CD8-positive, alpha-beta T cell (primary cell): ENCODE measurements at regions of chr7 and their contacts with region 1.

Region 1: GRCh38 chr7:102456327-102456726 is 8.3 kb downstream of the ALKBH4 start:
- DNase-seq: no peak
- ATAC-seq: no peak
- H3K4me3 ChIP-seq: no peak overlapping the region
- H3K4me3 Mint-ChIP-seq: no peak overlapping the region
- H3K27ac ChIP-seq: no peak overlapping the region
- H3K27ac Mint-ChIP-seq: no peak overlapping the region
- H3K4me1 ChIP-seq: no peaks in the 10 kb centered on the region
- H3K4me1 Mint-ChIP-seq: peaks cover 3% of the 10 kb centered on the region
- H3K27me3 ChIP-seq: no peaks in the 10 kb centered on the region
- H3K27me3 Mint-ChIP-seq: no peaks in the 10 kb centered on the region
- CTCF ChIP-seq: no peak

Region 2: DNA sequence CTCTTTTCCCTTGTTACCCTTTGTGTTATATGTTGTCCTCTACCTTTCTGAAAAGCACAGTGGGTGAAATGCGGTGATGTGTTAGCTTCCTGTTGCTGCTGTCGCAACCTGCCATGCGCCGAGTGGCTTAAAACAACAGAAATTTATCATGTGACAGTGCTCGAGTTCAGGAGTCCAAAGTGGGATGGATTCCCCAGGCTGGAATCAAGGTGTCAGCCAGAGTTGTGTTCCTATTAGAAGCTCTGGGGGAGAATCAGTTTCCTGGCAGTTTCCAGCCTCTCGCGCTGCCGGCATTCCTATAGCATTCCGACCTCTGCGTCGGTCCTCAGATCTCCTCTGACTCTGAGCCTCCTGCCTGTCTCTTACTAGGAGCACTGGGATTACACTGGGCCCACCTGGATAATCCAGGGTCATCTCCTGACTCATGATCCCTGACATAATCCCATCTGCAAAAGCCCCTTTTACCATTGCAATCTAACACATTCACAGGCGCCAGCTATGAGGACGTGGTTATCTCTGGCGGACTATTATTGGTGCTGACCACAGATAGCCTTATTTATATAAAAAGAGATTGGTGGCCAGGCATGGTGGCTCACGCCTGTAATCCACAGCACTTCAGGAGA is 431.4 kb before region 1 on chr7:
- CTCF ChIA-PET with region 1: no interaction called
- POLR2A ChIA-PET with region 1: no interaction called
- intact Hi-C with region 1: no loop called
- DNase-seq: no peak
- ATAC-seq: no peak
- H3K4me3 ChIP-seq: no peak overlapping the region
- H3K4me3 Mint-ChIP-seq: no peak overlapping the region
- H3K27ac ChIP-seq: no peak overlapping the region
- H3K27ac Mint-ChIP-seq: peak overlapping the region; percentile 28
- H3K4me1 ChIP-seq: no peaks in the 10 kb centered on the region
- H3K4me1 Mint-ChIP-seq: peaks cover 37% of the 10 kb centered on the region
- H3K27me3 ChIP-seq: no peaks in the 10 kb centered on the region
- H3K27me3 Mint-ChIP-seq: no peaks in the 10 kb centered on the region
- CTCF ChIP-seq: no peak

Region 3: DNA sequence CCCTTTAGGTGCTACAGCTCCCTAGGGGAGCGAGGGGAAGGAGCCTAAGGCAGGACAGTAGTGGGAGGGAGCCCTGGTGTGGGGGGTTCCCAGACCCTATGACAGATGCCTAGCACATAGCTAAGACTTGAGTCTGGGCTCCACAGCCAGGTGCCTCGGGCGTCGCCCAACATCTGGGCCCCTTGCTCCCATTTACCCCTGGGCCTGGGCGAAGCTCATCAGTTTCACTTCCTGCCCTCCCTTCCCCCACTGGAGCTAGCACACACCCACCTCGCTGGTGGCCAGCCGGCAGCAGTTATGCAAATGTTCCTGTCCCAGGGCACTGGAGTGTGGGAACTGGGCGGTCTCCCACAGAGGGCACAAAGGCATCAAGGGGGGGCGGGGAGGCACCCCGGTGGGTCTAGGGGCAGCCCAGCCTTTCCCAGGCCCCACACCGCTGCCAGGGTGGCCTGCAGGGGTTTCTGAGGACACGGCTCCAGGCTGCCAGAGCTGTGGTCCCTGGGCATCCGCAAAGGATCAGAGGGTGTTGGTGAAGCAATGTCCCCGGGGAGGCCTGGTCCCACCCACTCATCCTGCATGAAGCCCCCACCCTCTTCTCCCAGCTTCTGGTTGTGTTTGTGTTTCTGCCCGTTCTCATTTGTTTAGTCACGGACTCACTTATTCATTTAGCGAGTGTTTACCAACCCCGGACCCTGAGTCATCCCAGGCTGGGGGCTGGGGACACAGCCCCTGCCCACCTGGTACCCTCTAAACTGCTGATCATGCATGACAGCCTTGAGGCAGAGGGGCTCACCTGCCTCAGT is 149.3 kb before region 1 on chr7:
- CTCF ChIA-PET with region 1: no interaction called
- POLR2A ChIA-PET with region 1: no interaction called
- intact Hi-C with region 1: no loop called
- DNase-seq: peak in 2 of 9 experiments; percentile 44
- ATAC-seq: peak; percentile 56
- H3K4me3 ChIP-seq: no peak overlapping the region
- H3K4me3 Mint-ChIP-seq: peak overlapping the region; percentile 5
- H3K27ac ChIP-seq: no peak overlapping the region
- H3K27ac Mint-ChIP-seq: no peak overlapping the region
- H3K4me1 ChIP-seq: no peaks in the 10 kb centered on the region
- H3K4me1 Mint-ChIP-seq: peaks cover 8% of the 10 kb centered on the region
- H3K27me3 ChIP-seq: no peaks in the 10 kb centered on the region
- H3K27me3 Mint-ChIP-seq: no peaks in the 10 kb centered on the region
- CTCF ChIP-seq: no peak

Region 4: GRCh38 chr7:102412548-102412947 is 43.8 kb before region 1 on chr7:
- CTCF ChIA-PET with region 1: interaction called, 65 read pairs
- POLR2A ChIA-PET with region 1: interaction called, 4 read pairs
- intact Hi-C with region 1: no loop called
- DNase-seq: peak in 7 of 9 experiments; percentile 38 to 71 (median 62)
- ATAC-seq: peak; percentile 32
- H3K4me3 ChIP-seq: no peak overlapping the region
- H3K4me3 Mint-ChIP-seq: no peak overlapping the region
- H3K27ac ChIP-seq: no peak overlapping the region
- H3K27ac Mint-ChIP-seq: no peak overlapping the region
- H3K4me1 ChIP-seq: peaks cover 37% of the 10 kb centered on the region
- H3K4me1 Mint-ChIP-seq: peaks cover 40% of the 10 kb centered on the region
- H3K27me3 ChIP-seq: no peaks in the 10 kb centered on the region
- H3K27me3 Mint-ChIP-seq: no peaks in the 10 kb centered on the region
- CTCF ChIP-seq: peak; percentile 66

Region 5: DNA sequence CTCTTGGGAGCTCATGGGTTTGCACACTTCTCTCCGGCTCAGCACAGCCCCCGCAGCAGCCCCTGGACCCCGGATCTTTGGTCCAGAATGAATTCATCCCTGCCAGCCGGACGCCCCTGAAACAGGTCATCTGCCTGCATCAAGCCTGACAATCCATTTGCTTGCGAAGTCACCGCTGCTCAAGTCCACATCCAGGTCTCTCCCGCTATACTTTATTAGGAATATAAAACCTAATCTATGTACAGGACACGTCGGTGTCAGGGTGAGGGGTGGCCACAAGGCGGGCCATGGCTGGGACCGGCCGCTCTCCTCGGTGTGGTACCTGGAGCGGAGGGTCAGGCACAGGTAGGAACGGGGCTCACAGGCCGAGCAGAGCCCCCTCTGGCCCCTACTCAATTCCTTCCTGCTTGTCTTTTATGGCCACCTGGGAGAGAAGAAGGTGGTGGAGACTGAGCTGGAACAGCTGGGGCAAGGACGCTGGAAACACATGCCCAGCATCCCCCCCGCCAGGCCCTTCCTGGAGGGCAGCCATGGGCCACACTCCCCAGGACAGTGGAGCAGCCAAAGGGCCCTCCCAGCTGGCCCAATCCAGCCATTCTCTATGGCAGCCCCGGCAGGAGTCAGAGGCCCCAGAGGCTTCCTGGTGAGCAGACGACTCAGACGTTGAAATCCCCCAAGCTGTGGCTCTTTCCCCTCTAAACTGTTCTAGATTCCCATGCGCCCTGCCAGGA is 17.1 kb after region 1 on chr7:
- CTCF ChIA-PET with region 1: no interaction called
- POLR2A ChIA-PET with region 1: no interaction called
- intact Hi-C with region 1: no loop called
- DNase-seq: peak in 1 of 9 experiments; percentile 18
- ATAC-seq: no peak
- H3K4me3 ChIP-seq: no peak overlapping the region
- H3K4me3 Mint-ChIP-seq: no peak overlapping the region
- H3K27ac ChIP-seq: no peak overlapping the region
- H3K27ac Mint-ChIP-seq: no peak overlapping the region
- H3K4me1 ChIP-seq: no peaks in the 10 kb centered on the region
- H3K4me1 Mint-ChIP-seq: no peaks in the 10 kb centered on the region
- H3K27me3 ChIP-seq: no peaks in the 10 kb centered on the region
- H3K27me3 Mint-ChIP-seq: no peaks in the 10 kb centered on the region
- CTCF ChIP-seq: no peak

Region 6: DNA sequence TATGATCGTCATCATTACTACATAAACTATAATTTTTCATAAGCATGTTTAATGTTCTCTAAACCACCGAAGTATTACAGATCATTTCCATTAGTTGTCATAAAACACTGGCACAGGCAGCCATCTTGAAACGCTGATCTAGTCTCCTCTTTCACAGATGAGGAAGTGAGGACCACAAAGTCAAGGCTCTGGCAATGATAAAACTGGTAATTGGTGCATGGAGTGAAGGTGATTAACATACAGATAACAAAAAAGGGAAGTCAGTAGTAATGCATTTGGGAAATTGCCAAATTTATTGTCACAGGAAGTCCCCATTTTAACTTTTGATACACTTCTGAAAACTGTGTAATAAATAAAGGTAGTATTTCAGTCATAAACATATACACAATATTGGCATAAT is 569.0 kb after region 1 on chr7:
- CTCF ChIA-PET with region 1: no interaction called
- POLR2A ChIA-PET with region 1: no interaction called
- intact Hi-C with region 1: no loop called
- DNase-seq: no peak
- ATAC-seq: no peak
- H3K4me3 ChIP-seq: no peak overlapping the region
- H3K4me3 Mint-ChIP-seq: no peak overlapping the region
- H3K27ac ChIP-seq: no peak overlapping the region
- H3K27ac Mint-ChIP-seq: no peak overlapping the region
- H3K4me1 ChIP-seq: no peaks in the 10 kb centered on the region
- H3K4me1 Mint-ChIP-seq: peaks cover 3% of the 10 kb centered on the region
- H3K27me3 ChIP-seq: no peaks in the 10 kb centered on the region
- H3K27me3 Mint-ChIP-seq: no peaks in the 10 kb centered on the region
- CTCF ChIP-seq: no peak